HEK293T (cell line): ENCODE measurements at regions of chr11 and their contacts with region 1.

Region 1: DNA sequence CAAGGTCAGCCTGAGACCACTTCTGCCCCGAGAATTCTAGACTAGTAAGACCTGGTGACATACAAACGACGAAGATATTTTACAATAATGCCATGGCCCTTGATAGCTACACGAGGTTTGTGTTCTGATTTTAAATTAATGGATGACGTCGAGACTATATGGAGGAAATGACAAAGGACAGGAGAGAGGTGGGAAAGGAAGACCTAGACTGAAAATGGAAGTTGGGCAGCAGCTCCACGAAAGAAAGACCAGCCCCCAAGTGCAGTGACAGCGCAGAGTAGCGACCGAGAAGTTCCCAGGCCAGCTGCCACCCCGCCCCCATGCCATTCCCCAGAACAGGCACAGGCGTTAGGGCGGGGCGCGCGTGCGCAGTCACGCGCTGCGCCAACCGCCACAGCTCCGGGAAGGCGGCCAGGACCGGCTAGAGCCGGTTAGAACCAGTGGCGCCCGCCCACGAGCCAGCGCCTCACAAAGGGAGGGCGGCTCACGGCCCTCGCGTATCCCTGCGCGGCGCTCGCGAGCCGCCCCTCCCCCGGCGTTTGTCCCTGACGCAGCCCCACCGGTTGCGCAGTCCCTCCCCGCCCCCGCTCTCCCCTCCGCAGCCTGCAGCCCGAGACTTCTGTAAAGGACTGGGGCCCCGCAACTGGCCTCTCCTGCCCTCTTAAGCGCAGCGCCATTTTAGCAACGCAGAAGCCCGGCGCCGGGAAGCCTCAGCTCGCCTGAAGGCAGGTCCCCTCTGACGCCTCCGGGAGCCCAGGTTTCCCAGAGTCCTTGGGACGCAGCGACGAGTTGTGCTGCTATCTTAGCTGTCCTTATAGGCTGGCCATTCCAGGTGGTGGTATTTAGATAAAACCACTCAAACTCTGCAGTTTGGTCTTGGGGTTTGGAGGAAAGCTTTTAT is 1.5 kb upstream of the MALAT1 start:
- DNase-seq: peak; percentile 85

Region 2: DNA sequence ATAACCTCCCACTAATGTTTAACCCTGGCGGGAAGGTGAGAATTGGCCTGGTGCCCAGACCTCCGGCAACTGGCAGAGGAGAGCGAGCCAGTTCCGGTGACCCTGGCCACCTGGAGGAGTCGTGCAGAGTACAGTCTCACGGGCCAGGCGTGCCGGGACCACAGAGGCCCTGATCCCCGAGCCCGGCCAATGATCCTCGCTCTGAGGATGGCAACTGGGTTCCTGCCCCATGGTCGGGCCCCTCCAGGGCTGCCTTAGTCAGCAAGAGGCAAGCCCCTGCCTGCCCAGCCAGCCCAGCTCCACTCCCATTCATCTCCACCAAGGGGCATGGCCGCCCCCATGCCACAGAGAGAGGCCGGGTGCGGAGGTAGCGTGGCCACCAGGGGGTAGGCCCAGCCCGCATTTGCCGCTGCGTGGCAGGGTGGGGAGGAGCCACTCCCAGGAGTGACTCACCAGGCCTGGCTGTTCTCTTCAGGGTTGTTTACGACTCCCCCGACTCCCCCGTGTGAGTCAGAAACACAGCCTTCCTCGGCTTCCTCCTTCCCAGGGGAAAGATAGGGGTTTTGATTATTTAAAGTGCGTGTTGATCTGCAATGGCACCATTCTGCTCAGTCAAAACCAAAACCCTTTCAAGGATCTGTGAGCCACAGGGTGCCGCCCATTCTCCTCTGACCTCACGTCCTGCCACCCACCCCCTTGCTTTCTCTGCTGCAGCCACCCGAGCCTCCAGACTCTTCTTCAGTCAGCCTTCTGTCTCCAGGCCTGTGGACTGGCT is 115.2 kb before region 1 on chr11 and contains the start of gene SLC25A45:
- CTCF ChIA-PET with region 1: no interaction called
- POLR2A ChIA-PET with region 1: interaction called, 38 read pairs
- DNase-seq: peak; percentile 78

Region 3: GRCh38 chr11:65448418-65449105 is 48.8 kb before region 1 on chr11:
- CTCF ChIA-PET with region 1: no interaction called
- POLR2A ChIA-PET with region 1: interaction called, 107 read pairs
- DNase-seq: no peak

Region 4: DNA sequence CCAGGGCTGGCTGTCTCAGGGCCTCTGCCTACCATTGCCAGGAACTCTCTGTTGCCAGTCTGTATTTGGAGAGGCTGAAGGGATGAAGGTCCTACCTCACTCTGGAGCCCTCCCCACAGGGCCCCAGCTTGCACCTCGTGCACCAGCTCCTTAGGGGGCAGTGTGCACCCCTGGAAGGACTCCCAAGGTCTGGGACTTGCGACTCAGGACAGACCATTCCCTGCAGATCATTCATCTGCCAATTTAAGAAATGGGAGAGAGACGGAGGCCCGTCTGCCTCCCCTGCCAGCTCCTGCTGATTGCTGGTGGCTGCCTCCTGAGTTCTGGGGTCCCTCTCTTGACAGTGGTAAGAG is 26.0 kb before region 1 on chr11:
- CTCF ChIA-PET with region 1: interaction called, 12 read pairs
- POLR2A ChIA-PET with region 1: interaction called, 1,783 read pairs
- DNase-seq: no peak

Region 5: GRCh38 chr11:65558002-65558931 is 60.9 kb after region 1 on chr11 and contains the start of gene LTBP3:
- CTCF ChIA-PET with region 1: no interaction called
- POLR2A ChIA-PET with region 1: interaction called, 10 read pairs
- DNase-seq: peak; percentile 67